Motor neuron (in vitro differentiated cells): ENCODE measurements at regions of chr13 and their contacts with region 1.

Region 1: GRCh38 chr13:99656092-99656745 is 154.9 kb downstream of the TM9SF2 start:
- ATAC-seq: peak; percentile 31 to 75 (median 60)
- H3K4me3 ChIP-seq: no peak overlapping the region
- H3K27ac ChIP-seq: no peak overlapping the region
- H3K4me1 ChIP-seq: peaks cover 21 to 28% of the 10 kb centered on the region in 2 donors

Region 2: GRCh38 chr13:99916366-99917103 is 260.3 kb after region 1 on chr13:
- in situ Hi-C with region 1: loop called in 1 of 9 experiments (anchors 25 kb)
- ATAC-seq: peak in 4 of 8 experiments; percentile 33 to 95 (median 90)
- H3K4me3 ChIP-seq: no peak overlapping the region
- H3K27ac ChIP-seq: no peak overlapping the region
- H3K4me1 ChIP-seq: peaks cover 0 to 7% of the 10 kb centered on the region in 2 donors

Region 3: GRCh38 chr13:99935777-99936176 is 279.6 kb after region 1 on chr13:
- in situ Hi-C with region 1: no loop called
- ATAC-seq: no peak
- H3K4me3 ChIP-seq: no peak overlapping the region
- H3K27ac ChIP-seq: no peak overlapping the region
- H3K4me1 ChIP-seq: peaks cover 0 to 11% of the 10 kb centered on the region in 2 donors

Region 4: GRCh38 chr13:100235311-100235901 is 579.2 kb after region 1 on chr13:
- in situ Hi-C with region 1: loop called in 2 of 9 experiments (anchors 25 kb)
- ATAC-seq: peak in 3 of 8 experiments; percentile 14 to 42 (median 36)
- H3K4me3 ChIP-seq: no peak overlapping the region
- H3K27ac ChIP-seq: no peak overlapping the region
- H3K4me1 ChIP-seq: peaks cover 9 to 29% of the 10 kb centered on the region in 2 donors

Region 5: DNA sequence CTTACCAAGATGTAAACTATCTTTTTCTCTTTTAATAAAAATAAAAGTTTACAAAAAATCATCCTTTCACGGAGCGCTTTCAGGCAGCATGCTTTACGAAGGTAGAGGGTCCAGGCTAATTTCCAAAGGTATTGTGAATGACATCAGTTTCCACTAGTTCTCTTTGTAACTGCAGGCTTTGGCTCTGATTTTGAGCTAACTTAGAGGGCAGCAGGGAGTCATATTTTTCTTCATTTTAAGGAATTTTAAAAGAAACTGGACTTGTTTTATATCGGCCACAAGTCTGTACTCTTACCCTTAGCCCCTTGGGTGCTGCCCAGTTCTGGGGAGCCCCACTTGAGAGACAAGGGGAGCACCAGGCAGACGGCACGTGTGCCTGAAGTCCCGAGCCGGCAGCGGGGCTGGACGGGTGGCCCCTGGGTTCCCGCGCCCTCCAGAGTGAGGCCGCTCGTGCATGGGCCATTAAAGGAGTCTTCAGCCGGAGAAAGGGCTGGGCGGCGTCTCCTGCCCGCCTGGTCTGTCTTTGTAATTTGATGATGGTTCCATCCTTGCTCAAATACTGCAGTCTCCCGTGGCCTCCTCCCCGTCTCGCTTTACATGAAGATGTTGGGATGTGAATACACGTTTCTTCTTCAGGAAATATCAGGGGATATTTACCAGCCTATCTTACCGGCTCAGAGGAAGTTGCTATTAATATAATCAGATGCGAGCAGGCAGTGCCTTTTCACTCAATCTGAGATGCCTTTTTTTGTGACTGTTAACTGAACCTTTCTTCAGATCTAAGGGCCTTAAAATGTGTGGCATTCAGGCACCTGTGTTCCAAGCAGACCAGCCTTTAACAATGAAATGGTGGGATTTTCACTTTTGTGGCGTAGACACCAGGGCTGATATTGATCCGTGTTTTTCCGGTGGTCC is 865.0 kb after region 1 on chr13:
- in situ Hi-C with region 1: loop called in 8 of 9 experiments (anchors 10 to 25 kb)
- ATAC-seq: peak in 5 of 8 experiments; percentile 31 to 78 (median 40)
- H3K4me3 ChIP-seq: no peak overlapping the region
- H3K27ac ChIP-seq: no peak overlapping the region
- H3K4me1 ChIP-seq: peaks cover 17 to 31% of the 10 kb centered on the region in 2 donors

Region 6: GRCh38 chr13:101127741-101128353 is 1471.6 kb after region 1 on chr13:
- in situ Hi-C with region 1: loop called in 2 of 9 experiments (anchors 25 kb)
- ATAC-seq: peak; percentile 40 to 72 (median 51)
- H3K4me3 ChIP-seq: no peak overlapping the region
- H3K27ac ChIP-seq: no peak overlapping the region
- H3K4me1 ChIP-seq: no peaks in the 10 kb centered on the region